ENCODE measurements at regions of chr1 and their contacts with region 1.

Region 1: GRCh38 chr1:159798893-159799292 is 3.3 kb upstream of the FCRL6 start:
- DNase-seq: peak; percentile 66
- ATAC-seq: peak; percentile 99
- H3K4me3 Mint-ChIP-seq: no peak overlapping the region
- H3K27ac Mint-ChIP-seq: no peak overlapping the region
- H3K4me1 Mint-ChIP-seq: no peaks in the 10 kb centered on the region
- H3K27me3 Mint-ChIP-seq: peaks cover 3% of the 10 kb centered on the region
- CTCF ChIP-seq: peak; percentile 48

Region 2: GRCh38 chr1:159780583-159781582 is 18.0 kb before region 1 on chr1 and contains the start of gene DUSP23:
- CTCF ChIA-PET with region 1: interaction called, 37 read pairs
- POLR2A ChIA-PET with region 1: no interaction called
- DNase-seq: peak; percentile 98
- ATAC-seq: peak; percentile 94
- H3K4me3 Mint-ChIP-seq: peak within 1 kb of the TSS; percentile 77
- H3K27ac Mint-ChIP-seq: no peak within 1 kb of the TSS
- H3K4me1 Mint-ChIP-seq: peaks cover 37% of the 10 kb centered on the region
- H3K27me3 Mint-ChIP-seq: peaks cover 12% of the 10 kb centered on the region
- CTCF ChIP-seq: peak; percentile 90
- total RNA-seq, gene DUSP23: 35.2 to 52.1 TPM (median 47.5 TPM) in 3 replicates

Region 3: GRCh38 chr1:159829273-159829634 is 30.4 kb after region 1 on chr1:
- CTCF ChIA-PET with region 1: interaction called, 41 read pairs
- POLR2A ChIA-PET with region 1: no interaction called
- DNase-seq: peak; percentile 67
- ATAC-seq: peak; percentile 96
- H3K4me3 Mint-ChIP-seq: no peak overlapping the region
- H3K27ac Mint-ChIP-seq: no peak overlapping the region; the same call in 1 of the 2 replicates
- H3K4me1 Mint-ChIP-seq: peaks cover 5% of the 10 kb centered on the region
- H3K27me3 Mint-ChIP-seq: peaks cover 22% of the 10 kb centered on the region
- CTCF ChIP-seq: peak; percentile 18; the same call in 1 of the 2 replicates

Region 4: DNA sequence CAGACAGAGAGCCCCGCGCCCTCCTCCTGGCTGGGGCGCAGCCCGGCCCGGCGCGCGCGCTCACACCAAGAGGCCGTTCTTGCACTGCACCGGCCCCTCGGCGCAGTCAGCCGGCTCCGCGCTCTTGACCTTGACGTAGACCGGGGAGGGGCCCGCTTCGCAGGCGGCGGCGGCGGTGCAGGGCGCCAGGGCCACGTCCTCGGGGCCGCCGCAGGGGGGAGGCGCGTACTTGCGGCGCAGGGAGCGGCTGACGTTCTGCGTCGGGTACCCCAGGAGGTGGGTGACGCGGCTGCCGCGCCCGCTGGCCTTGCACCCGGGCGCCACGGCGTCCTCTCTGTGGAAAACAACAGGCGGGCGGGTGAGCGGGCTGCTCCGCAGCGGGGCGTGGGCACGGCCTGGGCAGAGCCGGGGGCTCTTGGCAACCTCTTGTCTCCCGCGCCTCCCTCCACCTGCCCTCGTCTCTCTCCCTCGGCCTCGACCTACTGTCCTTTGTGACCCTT is 55.9 kb after region 1 on chr1:
- CTCF ChIA-PET with region 1: interaction called, 17 read pairs
- POLR2A ChIA-PET with region 1: no interaction called
- DNase-seq: peak; percentile 68
- ATAC-seq: peak; percentile 83
- H3K4me3 Mint-ChIP-seq: peak overlapping the region; percentile 87
- H3K27ac Mint-ChIP-seq: no peak overlapping the region
- H3K4me1 Mint-ChIP-seq: peaks cover 6% of the 10 kb centered on the region
- H3K27me3 Mint-ChIP-seq: peaks cover 46% of the 10 kb centered on the region
- CTCF ChIP-seq: no peak

Region 5: GRCh38 chr1:159891275-159892157 is 92.6 kb after region 1 on chr1:
- CTCF ChIA-PET with region 1: interaction called, 174 read pairs
- POLR2A ChIA-PET with region 1: no interaction called
- DNase-seq: peak; percentile 82
- ATAC-seq: peak; percentile 93
- H3K4me3 Mint-ChIP-seq: no peak overlapping the region
- H3K27ac Mint-ChIP-seq: no peak overlapping the region
- H3K4me1 Mint-ChIP-seq: peaks cover 9% of the 10 kb centered on the region
- H3K27me3 Mint-ChIP-seq: peaks cover 2% of the 10 kb centered on the region; the same call in 1 of the 2 replicates
- CTCF ChIP-seq: peak; percentile 79

Region 6: DNA sequence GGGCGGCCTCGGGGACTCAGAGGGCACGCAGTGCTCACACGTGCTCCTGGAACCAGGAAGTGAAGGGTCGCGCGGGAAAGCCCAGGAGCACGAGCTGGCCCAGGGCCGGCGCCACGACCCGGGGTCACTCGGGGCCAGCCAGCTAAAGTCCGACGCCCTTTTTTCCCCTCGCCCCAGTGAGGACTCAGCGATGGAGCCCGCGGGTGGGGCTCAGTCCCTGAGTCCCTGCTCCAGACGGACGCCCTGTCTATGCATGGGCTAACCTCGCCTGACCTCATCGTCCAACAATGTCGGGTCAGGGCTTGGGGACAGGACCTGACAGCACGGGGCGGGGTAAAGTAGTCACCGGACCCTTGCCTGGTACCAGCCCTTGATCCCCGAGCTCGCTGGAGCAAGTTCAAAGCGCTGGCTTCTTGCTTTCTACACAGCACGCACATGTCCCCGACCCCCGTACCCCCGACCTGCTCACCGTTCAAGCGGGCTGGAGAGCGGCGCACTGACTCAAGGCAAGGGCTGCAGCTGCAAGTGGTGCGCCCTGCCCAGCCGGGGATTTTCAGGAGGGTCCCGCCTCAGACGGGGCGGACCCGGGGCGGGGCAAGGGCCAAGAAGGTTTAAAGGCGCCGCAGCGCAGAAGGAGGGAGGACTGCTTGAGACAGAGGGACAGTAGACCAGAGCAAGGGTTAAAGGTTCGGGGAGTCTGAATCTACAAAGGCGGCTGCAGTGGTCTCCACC is 126.3 kb after region 1 on chr1 and contains the start of gene TAGLN2:
- CTCF ChIA-PET with region 1: interaction called, 12 read pairs
- POLR2A ChIA-PET with region 1: no interaction called
- DNase-seq: peak; percentile 88
- ATAC-seq: peak; percentile 80
- H3K4me3 Mint-ChIP-seq: peak within 1 kb of the TSS; percentile 85
- H3K27ac Mint-ChIP-seq: no peak within 1 kb of the TSS
- H3K4me1 Mint-ChIP-seq: peaks cover 37% of the 10 kb centered on the region
- H3K27me3 Mint-ChIP-seq: peaks cover 18% of the 10 kb centered on the region
- CTCF ChIP-seq: no peak
- total RNA-seq, gene TAGLN2: 66.9 to 75.3 TPM (median 73.3 TPM) in 3 replicates

Region 7: GRCh38 chr1:160193091-160193819 is 394.4 kb after region 1 on chr1:
- CTCF ChIA-PET with region 1: no interaction called
- POLR2A ChIA-PET with region 1: no interaction called
- DNase-seq: peak; percentile 96
- ATAC-seq: peak; percentile 88
- H3K4me3 Mint-ChIP-seq: no peak overlapping the region
- H3K27ac Mint-ChIP-seq: no peak overlapping the region
- H3K4me1 Mint-ChIP-seq: peaks cover 13% of the 10 kb centered on the region
- H3K27me3 Mint-ChIP-seq: no peaks in the 10 kb centered on the region; the same call in 1 of the 2 replicates
- CTCF ChIP-seq: peak; percentile 95